Calu3 (cell line): ENCODE measurements at regions of chr20 and their contacts with region 1.

Region 1: GRCh38 chr20:58890518-58891085 is 38.1 kb downstream of the GNAS start:
- DNase-seq: peak; percentile 83
- H3K4me3 Mint-ChIP-seq: peak overlapping the region; percentile 73
- H3K27ac Mint-ChIP-seq: peak overlapping the region; percentile 91
- H3K4me1 Mint-ChIP-seq: peaks cover 24% of the 10 kb centered on the region
- H3K27me3 Mint-ChIP-seq: no peaks in the 10 kb centered on the region
- CTCF ChIP-seq: no peak

Region 2: DNA sequence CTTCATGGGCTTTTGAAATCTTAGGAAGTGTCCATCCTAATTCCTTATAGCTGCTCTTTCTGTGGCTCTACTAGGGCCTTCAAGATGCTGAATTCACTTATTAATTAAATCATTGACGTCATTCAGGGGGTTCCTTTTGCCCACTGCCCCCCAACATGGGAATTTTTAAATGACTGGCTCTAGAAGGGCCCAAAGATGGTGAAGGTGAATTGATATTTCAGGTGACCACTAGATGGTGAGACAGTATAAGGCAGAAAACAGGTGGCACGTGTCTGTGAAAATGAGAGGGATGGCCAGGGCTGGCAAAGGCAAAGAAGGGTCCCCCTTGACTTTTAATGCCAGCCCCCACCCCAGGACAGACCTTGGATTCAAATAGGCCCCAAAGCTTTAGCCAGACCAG is 26.3 kb before region 1 on chr20:
- CTCF ChIA-PET with region 1: no interaction called
- intact Hi-C with region 1: no loop called
- DNase-seq: peak; percentile 29
- H3K4me3 Mint-ChIP-seq: no peak overlapping the region
- H3K27ac Mint-ChIP-seq: no peak overlapping the region
- H3K4me1 Mint-ChIP-seq: no peaks in the 10 kb centered on the region
- H3K27me3 Mint-ChIP-seq: peaks cover 33% of the 10 kb centered on the region
- CTCF ChIP-seq: peak; percentile 45

Region 3: GRCh38 chr20:59032023-59032712 is 141.6 kb after region 1 on chr20 and contains the start of gene ATP5F1E:
- CTCF ChIA-PET with region 1: no interaction called
- intact Hi-C with region 1: loop called (anchors 2 kb)
- DNase-seq: peak; percentile 100
- H3K4me3 Mint-ChIP-seq: peak within 1 kb of the TSS; percentile 95
- H3K27ac Mint-ChIP-seq: peak within 1 kb of the TSS; percentile 91
- H3K4me1 Mint-ChIP-seq: peaks cover 50% of the 10 kb centered on the region
- H3K27me3 Mint-ChIP-seq: no peaks in the 10 kb centered on the region
- CTCF ChIP-seq: no peak
- total RNA-seq, gene ATP5F1E: 108 and 116 TPM in 2 replicates